Psoas muscle (tissue), 8 donors: ENCODE measurements at regions of chr1 and their contacts with region 1.

Region 1: DNA sequence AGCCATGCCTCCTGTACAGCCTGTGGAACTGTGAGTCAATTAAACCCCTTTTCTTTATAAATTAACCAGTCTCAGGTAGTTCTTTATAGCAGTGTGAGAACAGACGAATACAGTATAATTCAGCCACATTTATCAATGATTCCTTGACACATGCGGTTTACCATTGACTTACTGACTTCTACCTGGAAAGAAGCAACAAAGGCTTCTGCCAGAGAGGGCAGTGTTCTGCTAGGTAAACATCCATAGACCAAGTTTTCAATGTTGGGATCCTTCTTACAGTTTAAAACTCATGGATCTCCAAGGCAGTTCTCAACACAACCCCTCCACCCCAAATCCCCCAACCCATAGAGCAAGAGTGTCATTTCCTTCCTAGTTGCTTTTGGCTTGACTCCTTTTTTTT is 150.6 kb downstream of the ZNF648 start:
- DNase-seq: no peak
- ATAC-seq: no peak
- H3K4me3 ChIP-seq: no peak overlapping the region
- H3K27ac ChIP-seq: no peak overlapping the region
- H3K4me1 ChIP-seq: no peaks in the 10 kb centered on the region
- H3K27me3 ChIP-seq: no peaks in the 10 kb centered on the region
- CTCF ChIP-seq: no peak

Region 2: DNA sequence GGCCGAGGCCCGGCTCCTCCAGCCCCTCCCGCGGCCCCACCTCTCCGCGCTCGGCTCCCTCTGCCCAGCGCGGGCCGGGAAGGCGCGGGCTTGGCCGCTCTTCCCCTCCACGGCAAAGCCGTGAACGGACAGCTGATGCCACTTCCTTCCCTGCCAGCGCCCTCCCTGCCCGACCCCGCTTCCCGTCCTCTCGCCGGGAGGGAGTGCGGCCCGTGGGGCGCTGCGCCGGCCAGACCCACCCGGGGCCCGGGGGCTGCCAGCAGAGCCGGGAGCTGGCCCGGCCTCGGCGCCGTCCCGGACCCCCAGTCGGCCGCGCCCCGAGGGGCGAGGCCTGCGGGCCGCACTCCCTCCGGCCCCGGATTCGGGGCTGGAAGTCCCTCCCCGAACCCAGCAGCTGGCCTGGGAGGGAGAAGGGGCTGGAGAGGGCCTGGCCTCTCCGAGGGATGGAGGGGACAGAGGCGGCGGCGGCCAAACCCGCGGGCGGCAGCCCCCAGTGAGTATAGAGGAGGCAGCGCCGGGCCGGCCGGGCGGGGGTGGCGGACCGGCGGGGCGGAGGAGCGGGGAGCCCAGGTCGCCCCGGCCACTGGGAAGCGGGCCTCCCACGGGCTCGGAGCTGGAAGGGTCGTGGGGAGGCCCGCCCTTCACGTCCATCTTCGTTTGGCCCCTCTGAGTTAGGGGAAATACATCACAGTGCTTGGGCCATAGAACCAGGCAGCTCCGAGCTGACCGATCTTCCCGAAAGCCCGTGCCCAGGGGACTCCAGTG is 997.9 kb before region 1 on chr1 and contains the start of gene KIAA1614:
- intact Hi-C with region 1: loop called in 1 of 2 experiments (anchors 10 kb)
- DNase-seq: peak; percentile 50 to 67
- ATAC-seq: peak; percentile 34 to 74 (median 62)
- H3K4me3 ChIP-seq: peak within 1 kb of the TSS; percentile 71
- H3K27ac ChIP-seq: peak within 1 kb of the TSS; percentile 56
- H3K4me1 ChIP-seq: no peaks in the 10 kb centered on the region
- H3K27me3 ChIP-seq: peaks cover 0 to 23% (median 9%) of the 10 kb centered on the region in 3 donors
- CTCF ChIP-seq: no peak
- total RNA-seq, gene KIAA1614: 0.84 to 1.1 (median 0.95) TPM